ENCODE measurements at regions of chr20 and their contacts with region 1.

Region 1: GRCh38 chr20:33915726-33916331 is 77.9 kb upstream of the RALY start:
- DNase-seq: peak; percentile 58
- H3K4me3 Mint-ChIP-seq: no peak overlapping the region
- H3K27ac Mint-ChIP-seq: no peak overlapping the region
- H3K4me1 Mint-ChIP-seq: peaks cover 45% of the 10 kb centered on the region
- H3K27me3 Mint-ChIP-seq: peaks cover 34% of the 10 kb centered on the region

Region 2: DNA sequence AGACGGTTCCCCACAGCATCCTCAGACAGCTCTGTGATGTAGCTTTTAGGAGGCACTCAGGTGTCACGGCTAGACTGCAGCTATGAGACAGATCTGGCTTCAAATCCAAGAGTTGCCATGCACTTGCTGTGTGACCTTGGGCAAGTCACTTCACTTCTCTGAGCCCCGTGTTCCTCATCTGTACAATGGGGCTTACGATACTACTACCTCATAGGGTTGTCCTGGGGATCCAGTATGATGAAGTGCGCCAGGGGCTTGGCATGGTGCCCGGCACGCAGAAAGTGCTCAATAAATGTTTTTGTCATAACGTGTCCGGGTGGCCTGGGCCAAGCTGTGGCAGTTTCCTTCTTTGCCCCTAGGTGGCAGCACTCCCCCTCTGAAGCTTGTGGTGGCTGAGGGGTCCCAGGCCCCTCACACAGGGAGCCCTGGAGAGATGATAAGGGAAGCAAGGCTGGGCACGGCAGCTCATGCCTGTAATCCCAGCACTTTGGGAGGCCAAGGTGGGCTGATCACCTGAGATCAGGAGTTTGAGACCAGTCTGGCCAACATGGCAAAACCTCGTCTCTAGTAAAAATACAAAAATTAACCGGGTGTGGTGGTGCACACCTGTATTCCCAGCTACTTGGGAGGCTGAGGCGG is 123.8 kb before region 1 on chr20:
- CTCF ChIA-PET with region 1: interaction called, 26 read pairs
- DNase-seq: peak; percentile 65
- H3K4me3 Mint-ChIP-seq: no peak overlapping the region
- H3K27ac Mint-ChIP-seq: peak overlapping the region; percentile 42
- H3K4me1 Mint-ChIP-seq: peaks cover 33% of the 10 kb centered on the region
- H3K27me3 Mint-ChIP-seq: no peaks in the 10 kb centered on the region

Region 3: GRCh38 chr20:33862709-33863403 is 53.0 kb before region 1 on chr20:
- CTCF ChIA-PET with region 1: interaction called, 21 read pairs
- DNase-seq: peak; percentile 62
- H3K4me3 Mint-ChIP-seq: no peak overlapping the region
- H3K27ac Mint-ChIP-seq: no peak overlapping the region
- H3K4me1 Mint-ChIP-seq: peaks cover 51% of the 10 kb centered on the region
- H3K27me3 Mint-ChIP-seq: peaks cover 6% of the 10 kb centered on the region

Region 4: DNA sequence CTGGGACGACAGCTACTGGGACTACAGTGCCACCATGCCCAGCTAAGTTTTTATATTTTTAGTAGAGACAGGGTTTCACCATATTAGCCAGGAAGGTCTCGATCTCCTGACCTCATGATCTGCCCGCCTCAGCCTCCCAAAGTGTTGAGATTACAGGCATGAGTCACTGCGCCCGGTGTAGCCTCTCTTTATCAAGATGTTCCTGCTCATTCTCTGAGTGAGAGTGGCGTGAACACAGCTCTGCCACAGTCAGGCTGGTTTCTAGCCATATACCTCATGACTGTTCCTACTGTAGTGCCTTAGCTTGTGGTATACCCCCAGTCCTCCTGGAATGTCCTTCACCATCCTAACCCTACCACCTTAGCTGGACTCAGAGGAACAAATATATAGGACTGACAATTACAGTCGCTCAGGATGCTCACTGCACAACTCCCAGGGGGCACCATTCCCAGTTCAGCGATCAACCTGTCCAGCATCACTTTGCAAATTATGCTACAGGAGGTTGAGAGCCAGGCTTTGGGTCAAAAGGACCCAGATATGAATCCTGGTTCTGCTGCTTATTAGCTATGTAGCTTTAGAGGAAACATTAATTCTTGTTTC is 18.4 kb before region 1 on chr20:
- CTCF ChIA-PET with region 1: interaction called, 12 read pairs
- DNase-seq: no peak
- H3K4me3 Mint-ChIP-seq: no peak overlapping the region
- H3K27ac Mint-ChIP-seq: no peak overlapping the region
- H3K4me1 Mint-ChIP-seq: no peaks in the 10 kb centered on the region
- H3K27me3 Mint-ChIP-seq: peaks cover 79% of the 10 kb centered on the region

Region 5: DNA sequence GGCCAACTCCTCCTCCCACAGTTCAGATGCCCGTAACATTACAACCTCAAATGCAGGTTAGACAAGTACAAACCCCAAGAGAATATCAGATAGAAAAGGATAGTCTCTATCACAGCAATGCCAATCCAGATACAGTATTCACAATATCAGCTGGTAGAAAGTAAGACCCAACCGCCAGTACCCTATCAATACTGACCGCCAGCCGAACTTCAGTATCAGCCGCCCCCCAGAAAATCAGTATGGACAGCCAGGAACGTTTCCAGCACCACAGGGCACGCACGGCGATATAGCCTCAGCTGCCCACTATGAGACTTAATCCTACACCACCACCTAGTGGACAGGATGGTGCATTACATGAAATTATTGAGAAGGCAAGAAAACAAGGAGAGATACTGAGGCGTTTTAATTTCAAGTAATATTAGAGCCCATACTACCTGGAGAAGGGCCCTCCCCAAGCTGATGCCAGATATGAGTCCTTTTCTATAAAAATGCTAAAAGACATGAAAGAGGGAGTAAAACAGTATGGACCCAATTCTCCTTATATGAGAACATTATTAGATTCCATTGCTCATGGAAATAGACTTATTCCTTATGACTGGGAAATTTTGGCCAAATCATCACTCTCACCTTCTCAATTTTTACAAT is 213.8 kb after region 1 on chr20:
- CTCF ChIA-PET with region 1: interaction called, 15 read pairs
- DNase-seq: peak; percentile 66
- H3K4me3 Mint-ChIP-seq: no peak overlapping the region
- H3K27ac Mint-ChIP-seq: no peak overlapping the region
- H3K4me1 Mint-ChIP-seq: peaks cover 8% of the 10 kb centered on the region
- H3K27me3 Mint-ChIP-seq: peaks cover 23% of the 10 kb centered on the region